CD4-positive, alpha-beta T cell (primary cell): ENCODE measurements at regions of chr9 and their contacts with region 1.

Region 1: GRCh38 chr9:38371495-38371894 is 21.0 kb upstream of the ALDH1B1 start:
- DNase-seq: peak in 6 of 14 experiments; percentile 6 to 60 (median 34)
- ATAC-seq: no peak
- H3K4me3 ChIP-seq: no peak overlapping the region
- H3K4me3 Mint-ChIP-seq: no peak overlapping the region
- H3K27ac ChIP-seq: no peak overlapping the region
- H3K27ac Mint-ChIP-seq: no peak overlapping the region
- H3K4me1 ChIP-seq: no peaks in the 10 kb centered on the region
- H3K4me1 Mint-ChIP-seq: no peaks in the 10 kb centered on the region
- H3K27me3 ChIP-seq: no peaks in the 10 kb centered on the region
- H3K27me3 Mint-ChIP-seq: peaks cover 21% of the 10 kb centered on the region
- CTCF ChIP-seq: no peak

Region 2: GRCh38 chr9:38432922-38433510 is 61.5 kb after region 1 on chr9:
- CTCF ChIA-PET with region 1: no interaction called
- POLR2A ChIA-PET with region 1: no interaction called
- intact Hi-C with region 1: loop called in 1 of 2 experiments (anchors 2 kb)
- DNase-seq: peak in 3 of 14 experiments; percentile 38 to 57 (median 48)
- ATAC-seq: no peak
- H3K4me3 ChIP-seq: no peak overlapping the region
- H3K4me3 Mint-ChIP-seq: no peak overlapping the region
- H3K27ac ChIP-seq: no peak overlapping the region
- H3K27ac Mint-ChIP-seq: no peak overlapping the region
- H3K4me1 ChIP-seq: peaks cover 2% of the 10 kb centered on the region
- H3K4me1 Mint-ChIP-seq: peaks cover 19% of the 10 kb centered on the region
- H3K27me3 ChIP-seq: no peaks in the 10 kb centered on the region
- H3K27me3 Mint-ChIP-seq: peaks cover 1% of the 10 kb centered on the region
- CTCF ChIP-seq: peak; percentile 48

Region 3: GRCh38 chr9:38620483-38621433 is 249.3 kb after region 1 on chr9 and contains the start of gene ANKRD18A:
- CTCF ChIA-PET with region 1: no interaction called
- POLR2A ChIA-PET with region 1: no interaction called
- intact Hi-C with region 1: no loop called
- DNase-seq: peak; percentile 42 to 88 (median 66)
- ATAC-seq: peak; percentile 78
- H3K4me3 ChIP-seq: peak within 1 kb of the TSS; percentile 70
- H3K4me3 Mint-ChIP-seq: peak within 1 kb of the TSS; percentile 96
- H3K27ac ChIP-seq: peak within 1 kb of the TSS in 1 of 2 donors; percentile 13
- H3K27ac Mint-ChIP-seq: peak within 1 kb of the TSS; percentile 70
- H3K4me1 ChIP-seq: peaks cover 30% of the 10 kb centered on the region
- H3K4me1 Mint-ChIP-seq: peaks cover 12% of the 10 kb centered on the region
- H3K27me3 ChIP-seq: peaks cover 3 to 10% of the 10 kb centered on the region in 2 experiments
- H3K27me3 Mint-ChIP-seq: peaks cover 51% of the 10 kb centered on the region
- CTCF ChIP-seq: peak; percentile 45
- total RNA-seq, gene ANKRD18A: 7.2 to 7.8 TPM